Lower lobe of right lung (tissue), 2 donors: ENCODE measurements at regions of chr14 and their contacts with region 1.

Region 1: DNA sequence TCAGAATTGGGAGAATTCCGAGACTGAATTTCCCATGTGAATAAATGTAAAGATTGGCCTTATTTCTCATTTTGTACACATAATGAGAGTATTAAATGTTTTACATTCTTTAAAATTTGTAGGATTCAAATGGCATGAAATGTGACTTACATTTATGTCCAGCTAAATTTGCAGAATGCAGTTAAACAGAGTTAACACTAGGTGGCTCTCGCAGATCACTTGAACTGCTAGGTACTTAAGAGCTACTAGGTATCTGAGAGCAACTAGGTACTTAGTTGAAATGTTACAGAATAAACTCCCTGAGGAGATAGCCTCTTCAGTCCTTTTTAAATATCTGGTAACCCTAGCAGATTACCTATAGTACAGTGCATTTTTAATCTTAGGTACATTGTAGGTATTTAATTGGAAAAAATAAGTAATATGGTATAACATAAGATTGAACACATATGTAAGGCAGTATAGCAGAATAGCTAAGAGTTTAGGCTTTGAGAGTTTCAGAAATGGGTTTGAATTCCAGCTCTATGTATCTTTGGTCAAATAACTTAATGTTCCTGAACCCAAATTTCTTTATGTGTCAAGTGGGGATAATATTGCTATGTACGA is 73.8 kb downstream of the KIAA0586 start:
- DNase-seq: no peak
- ATAC-seq: peak; percentile 74 to 75
- H3K4me3 ChIP-seq: no peak overlapping the region
- H3K27ac ChIP-seq: no peak overlapping the region
- H3K4me1 ChIP-seq: no peaks in the 10 kb centered on the region
- H3K27me3 ChIP-seq: no peaks in the 10 kb centered on the region
- CTCF ChIP-seq: peak; percentile 78

Region 2: DNA sequence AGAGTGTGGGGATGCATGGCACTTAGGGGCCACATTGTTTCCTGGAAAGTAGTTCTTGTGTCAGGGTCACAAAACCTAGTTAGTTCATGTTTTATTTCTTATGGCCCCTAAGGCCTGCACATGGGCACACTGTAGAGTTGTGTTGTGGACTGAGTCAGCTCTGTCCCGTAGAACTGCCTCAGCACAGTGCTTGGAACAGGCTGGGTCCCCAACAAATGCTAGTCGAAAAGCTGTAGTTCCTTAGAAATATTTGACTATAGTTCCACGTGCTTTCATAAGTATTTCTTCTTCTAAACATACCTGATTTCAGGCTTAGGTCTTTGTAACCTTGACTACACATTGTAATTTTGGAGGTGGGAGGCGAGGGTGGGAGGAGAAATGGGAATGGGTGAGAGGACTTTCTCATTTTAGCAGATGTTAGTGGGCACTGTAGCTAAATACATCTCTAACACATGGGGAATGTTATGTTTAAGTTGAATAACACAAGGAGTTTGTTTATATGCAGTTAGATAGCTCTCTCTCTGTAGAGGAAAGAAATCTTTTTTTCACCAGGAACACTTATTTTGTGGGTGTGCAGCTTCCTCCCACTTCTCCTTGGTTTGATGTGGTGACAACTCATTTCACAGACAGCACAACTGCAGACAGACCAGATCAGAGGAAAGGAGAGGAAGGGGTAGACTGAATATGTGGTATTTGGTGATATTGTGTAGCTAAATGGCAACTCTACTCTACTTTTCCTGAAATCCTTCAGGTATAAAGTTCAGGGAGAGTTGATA is 96.9 kb after region 1 on chr14:
- intact Hi-C with region 1: no loop called
- DNase-seq: no peak
- ATAC-seq: no peak
- H3K4me3 ChIP-seq: no peak overlapping the region
- H3K27ac ChIP-seq: no peak overlapping the region
- H3K4me1 ChIP-seq: no peaks in the 10 kb centered on the region
- H3K27me3 ChIP-seq: no peaks in the 10 kb centered on the region
- CTCF ChIP-seq: no peak

Region 3: GRCh38 chr14:58637391-58638230 is 136.3 kb after region 1 on chr14 and contains the start of gene DACT1:
- intact Hi-C with region 1: loop called (anchors 10 kb)
- DNase-seq: peak; percentile 60
- ATAC-seq: peak; percentile 74 to 82
- H3K4me3 ChIP-seq: peak within 1 kb of the TSS; percentile 68
- H3K27ac ChIP-seq: peak within 1 kb of the TSS; percentile 87
- H3K4me1 ChIP-seq: peaks cover 14% of the 10 kb centered on the region
- H3K27me3 ChIP-seq: peaks cover 14% of the 10 kb centered on the region
- CTCF ChIP-seq: no peak
- total RNA-seq, gene DACT1: 3.7 TPM